Heart left ventricle (tissue), 16 donors: ENCODE measurements at regions of chr2 and their contacts with region 1.

Region 1: GRCh38 chr2:171416009-171416926 is 17.5 kb downstream of the METTL8 start:
- DNase-seq: peak; percentile 81 to 91 (median 85)
- ATAC-seq: peak; percentile 92 to 99 (median 98)
- H3K4me3 ChIP-seq: no peak overlapping the region
- H3K27ac ChIP-seq: peak overlapping the region in 2 of 12 donors; percentile 11 to 32
- H3K4me1 ChIP-seq: peaks cover 0 to 10% (median 1%) of the 10 kb centered on the region in 12 donors
- H3K27me3 ChIP-seq: no peaks in the 10 kb centered on the region
- CTCF ChIP-seq: peak; percentile 71 to 91 (median 82)
- POLR2A ChIP-seq: no peak

Region 2: GRCh38 chr2:170928824-170929685 is 487.2 kb before region 1 on chr2 and contains the start of gene GORASP2:
- intact Hi-C with region 1: loop called in 1 of 10 experiments (anchors 5 kb)
- DNase-seq: peak; percentile 98 to 99 (median 99)
- ATAC-seq: peak; percentile 96 to 99 (median 98)
- H3K4me3 ChIP-seq: peak within 1 kb of the TSS; percentile 73 to 97 (median 91)
- H3K27ac ChIP-seq: peak within 1 kb of the TSS; percentile 82 to 97 (median 94)
- H3K4me1 ChIP-seq: peaks cover 0 to 46% (median 32%) of the 10 kb centered on the region in 12 donors
- H3K27me3 ChIP-seq: no peaks in the 10 kb centered on the region
- CTCF ChIP-seq: peak in 10 of 12 donors; percentile 95 to 100 (median 98)
- POLR2A ChIP-seq: peak; percentile 32 to 80
- total RNA-seq, gene GORASP2: 47.5 to 76.1 (median 62.6) TPM

Region 3: DNA sequence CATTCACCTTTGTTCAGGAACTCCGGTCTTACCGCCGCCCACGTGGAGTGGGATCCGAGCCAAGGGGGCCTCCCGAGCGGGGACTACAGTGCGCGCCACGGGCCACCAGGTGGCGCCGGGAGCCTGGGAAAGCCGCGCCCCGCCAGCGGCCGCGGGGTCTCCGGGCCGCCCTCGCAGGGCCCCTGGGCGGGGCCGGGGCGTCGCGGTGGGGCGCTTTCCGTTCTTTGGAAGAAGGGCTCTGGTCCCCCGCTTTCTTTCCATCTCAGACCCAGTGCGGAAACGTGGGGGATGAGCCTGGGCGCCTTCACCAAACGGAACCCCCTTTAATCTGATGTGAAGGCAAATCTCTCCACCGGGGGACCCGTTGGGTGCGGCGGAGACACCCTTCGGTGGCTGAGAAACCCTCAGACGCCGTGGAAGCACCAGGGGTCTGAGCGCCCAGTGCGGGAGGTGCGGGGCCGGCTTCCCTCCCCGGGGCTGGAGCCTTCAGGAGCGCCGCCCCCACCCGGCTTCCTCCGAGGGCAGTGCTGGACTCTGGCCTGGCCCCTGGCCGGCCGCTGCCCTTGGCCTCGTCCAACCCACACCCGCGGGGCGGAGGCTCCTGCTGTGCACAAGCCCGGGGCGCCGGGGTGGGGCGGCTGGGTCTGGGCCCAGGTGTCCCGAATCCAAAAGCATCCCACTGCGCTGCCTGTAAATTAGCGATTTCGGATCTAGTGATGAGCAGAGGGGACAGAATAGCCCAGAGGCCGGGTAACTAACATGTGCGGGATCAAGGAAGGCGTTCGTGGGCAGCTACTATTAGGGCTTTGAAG is 442.6 kb before region 1 on chr2:
- intact Hi-C with region 1: loop called (anchors 1 to 5 kb)
- DNase-seq: peak; percentile 82 to 91 (median 86)
- ATAC-seq: peak; percentile 79 to 96 (median 94)
- H3K4me3 ChIP-seq: peak overlapping the region; percentile 48 to 96 (median 73)
- H3K27ac ChIP-seq: peak overlapping the region; percentile 56 to 89 (median 79)
- H3K4me1 ChIP-seq: peaks cover 0 to 16% (median 6%) of the 10 kb centered on the region in 12 donors
- H3K27me3 ChIP-seq: no peaks in the 10 kb centered on the region
- CTCF ChIP-seq: peak; percentile 67 to 99 (median 96)
- POLR2A ChIP-seq: peak in 1 of 2 donors; percentile 24

Region 4: DNA sequence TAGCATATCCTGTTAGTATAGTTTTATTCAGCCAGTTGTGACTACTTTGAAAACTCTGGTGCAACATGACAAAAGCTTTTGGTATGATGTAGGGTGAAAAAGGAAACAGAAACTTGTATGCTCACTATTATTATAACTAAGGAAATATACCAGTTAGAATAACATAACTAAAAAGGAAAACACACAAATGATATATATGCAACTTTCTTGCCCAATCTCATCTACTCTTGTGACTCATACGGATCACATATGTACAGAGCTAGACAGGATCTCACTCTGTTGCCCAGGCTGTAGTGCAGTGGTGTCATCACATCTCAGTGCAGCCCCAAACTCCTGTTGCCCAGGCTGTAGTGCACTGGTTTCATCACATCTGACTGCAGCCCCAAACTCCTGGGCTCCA is 243.2 kb before region 1 on chr2:
- intact Hi-C with region 1: loop called in 2 of 10 experiments (anchors 10 kb)
- DNase-seq: no peak
- ATAC-seq: no peak
- H3K4me3 ChIP-seq: no peak overlapping the region
- H3K27ac ChIP-seq: no peak overlapping the region
- H3K4me1 ChIP-seq: no peaks in the 10 kb centered on the region
- H3K27me3 ChIP-seq: no peaks in the 10 kb centered on the region
- CTCF ChIP-seq: no peak
- POLR2A ChIP-seq: no peak

Region 5: GRCh38 chr2:171347591-171348032 is 68.7 kb before region 1 on chr2:
- intact Hi-C with region 1: loop called in 2 of 10 experiments (anchors 5 to 10 kb)
- DNase-seq: no peak
- ATAC-seq: peak; percentile 45 to 88 (median 64)
- H3K4me3 ChIP-seq: no peak overlapping the region
- H3K27ac ChIP-seq: peak overlapping the region in 11 of 12 donors; percentile 12 to 70 (median 54)
- H3K4me1 ChIP-seq: peaks cover 0 to 20% (median 16%) of the 10 kb centered on the region in 12 donors
- H3K27me3 ChIP-seq: no peaks in the 10 kb centered on the region
- CTCF ChIP-seq: no peak
- POLR2A ChIP-seq: no peak